ENCODE measurements at regions of chr17 and their contacts with region 1.

Region 1: DNA sequence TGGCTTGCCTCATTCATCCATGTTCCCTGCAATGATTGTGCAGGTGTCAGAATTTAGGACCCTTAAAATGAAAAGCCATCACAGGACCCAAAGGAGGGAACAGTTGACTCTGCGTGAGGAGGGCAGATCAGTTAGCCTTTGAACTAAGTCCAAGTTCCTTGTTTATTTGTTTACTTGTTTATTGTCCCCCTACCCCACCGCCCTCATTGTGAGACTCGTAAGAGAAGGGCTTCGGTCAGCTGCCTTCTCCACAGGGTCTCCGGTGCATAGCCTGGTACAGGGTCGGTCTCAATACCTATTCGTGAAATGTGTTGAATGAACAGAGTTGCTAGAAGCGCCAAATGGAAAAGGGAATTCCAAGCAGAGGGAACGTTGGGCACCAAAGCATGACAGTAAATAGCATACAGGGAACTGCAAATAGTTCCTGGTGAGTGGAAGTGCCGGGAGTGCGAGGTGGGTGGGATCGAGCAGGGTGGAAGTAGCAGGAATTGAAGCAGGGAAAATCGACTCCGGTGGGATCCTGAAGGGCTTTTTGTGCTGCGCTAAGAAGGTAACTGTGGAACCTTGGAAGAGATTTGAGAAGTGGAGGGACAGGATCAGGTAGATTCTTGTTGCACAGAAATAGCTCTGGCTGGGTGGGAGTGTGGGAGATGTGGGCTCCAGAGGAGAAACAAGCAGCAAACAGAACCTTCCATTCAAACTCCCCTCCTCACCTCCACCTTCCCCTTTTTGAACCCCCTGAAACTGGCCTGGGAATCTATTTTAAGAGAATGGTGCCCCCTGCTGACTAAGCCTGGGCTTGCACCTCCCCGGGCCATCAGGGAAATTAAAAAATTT is 12.7 kb downstream of the SLC35B1 start:
- DNase-seq: peak; percentile 83
- ATAC-seq: peak; percentile 80
- H3K4me3 ChIP-seq: no peak overlapping the region
- H3K4me3 Mint-ChIP-seq: no peak overlapping the region
- H3K27ac ChIP-seq: no peak overlapping the region
- H3K27ac Mint-ChIP-seq: no peak overlapping the region
- H3K4me1 ChIP-seq: peaks cover 16 to 19% of the 10 kb centered on the region in 2 donors
- H3K4me1 Mint-ChIP-seq: peaks cover 17% of the 10 kb centered on the region
- H3K27me3 ChIP-seq: no peaks in the 10 kb centered on the region
- H3K27me3 Mint-ChIP-seq: peaks cover 3% of the 10 kb centered on the region
- CTCF ChIP-seq: peak; percentile 97

Region 2: GRCh38 chr17:49582789-49583188 is 112.3 kb before region 1 on chr17:
- CTCF ChIA-PET with region 1: interaction called, 10 read pairs
- POLR2A ChIA-PET with region 1: no interaction called
- intact Hi-C with region 1: no loop called
- DNase-seq: no peak
- ATAC-seq: no peak
- H3K4me3 ChIP-seq: no peak overlapping the region
- H3K4me3 Mint-ChIP-seq: no peak overlapping the region
- H3K27ac ChIP-seq: no peak overlapping the region
- H3K27ac Mint-ChIP-seq: peak overlapping the region; percentile 24
- H3K4me1 ChIP-seq: no peaks in the 10 kb centered on the region
- H3K4me1 Mint-ChIP-seq: no peaks in the 10 kb centered on the region
- H3K27me3 ChIP-seq: peaks cover 0 to 6% (median 1%) of the 10 kb centered on the region in 4 experiments
- H3K27me3 Mint-ChIP-seq: peaks cover 4% of the 10 kb centered on the region
- CTCF ChIP-seq: no peak

Region 3: DNA sequence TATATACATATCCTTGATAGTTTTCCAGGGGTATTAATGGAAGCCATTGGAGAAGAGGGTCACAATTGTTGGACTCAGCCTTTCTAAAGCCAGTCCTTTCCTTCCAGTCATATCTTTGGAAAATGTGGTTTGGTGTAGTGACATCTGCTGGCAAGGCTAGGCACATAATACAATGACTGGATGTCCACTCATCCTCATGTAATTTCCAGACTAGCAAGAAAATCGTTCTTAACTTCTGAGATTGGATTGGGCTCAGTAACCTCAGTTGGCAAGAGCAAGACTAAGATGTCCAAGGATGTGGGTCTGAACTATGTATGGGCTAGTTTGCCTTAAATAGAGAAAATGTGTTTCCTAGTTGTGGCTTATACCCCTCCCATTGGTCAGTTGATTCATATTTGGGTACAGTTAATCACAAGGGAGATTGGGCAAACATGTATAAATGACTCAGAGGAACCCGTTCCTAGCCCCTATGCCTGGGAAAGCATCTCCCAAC is 84.7 kb after region 1 on chr17:
- CTCF ChIA-PET with region 1: interaction called, 10 read pairs
- POLR2A ChIA-PET with region 1: no interaction called
- intact Hi-C with region 1: no loop called
- DNase-seq: peak; percentile 58
- ATAC-seq: peak; percentile 60
- H3K4me3 ChIP-seq: no peak overlapping the region
- H3K4me3 Mint-ChIP-seq: no peak overlapping the region
- H3K27ac ChIP-seq: no peak overlapping the region
- H3K27ac Mint-ChIP-seq: no peak overlapping the region
- H3K4me1 ChIP-seq: no peaks in the 10 kb centered on the region
- H3K4me1 Mint-ChIP-seq: peaks cover 3% of the 10 kb centered on the region
- H3K27me3 ChIP-seq: no peaks in the 10 kb centered on the region
- H3K27me3 Mint-ChIP-seq: no peaks in the 10 kb centered on the region
- CTCF ChIP-seq: peak; percentile 52

Measured in B cell (primary cell).